ENCODE measurements at regions of chr11 and their contacts with region 1.

Region 1: DNA sequence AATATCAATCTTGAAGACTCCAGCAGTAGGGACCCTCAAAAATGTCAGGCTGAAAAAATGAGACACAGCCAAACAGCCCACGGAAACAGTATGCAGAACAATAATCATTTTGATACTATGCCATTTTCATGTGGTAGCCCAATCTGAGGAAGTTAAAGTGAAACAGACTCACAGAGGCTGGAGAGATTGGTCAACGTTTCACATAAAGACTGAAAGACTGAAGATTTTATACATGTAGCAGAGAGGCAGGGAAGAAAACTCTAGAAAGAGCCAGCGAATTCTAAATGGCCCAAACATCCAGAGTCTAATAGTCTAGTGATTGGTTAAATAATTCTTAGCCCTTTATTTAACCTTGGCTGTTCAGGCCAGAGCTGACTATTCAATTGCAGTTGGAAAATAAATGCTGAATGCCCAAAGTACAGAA is 49.4 kb downstream of the MAML2 start:
- DNase-seq: no peak
- H3K4me3 Mint-ChIP-seq: peak overlapping the region; percentile 1
- H3K27ac Mint-ChIP-seq: no peak overlapping the region
- H3K4me1 Mint-ChIP-seq: peaks cover 78% of the 10 kb centered on the region
- H3K27me3 Mint-ChIP-seq: no peaks in the 10 kb centered on the region

Region 2: GRCh38 chr11:96306933-96307775 is 13.5 kb after region 1 on chr11:
- CTCF ChIA-PET with region 1: interaction called, 6 read pairs
- intact Hi-C with region 1: loop called (anchors 1 kb)
- DNase-seq: peak; percentile 64
- H3K4me3 Mint-ChIP-seq: peak overlapping the region; percentile 47
- H3K27ac Mint-ChIP-seq: peak overlapping the region; percentile 25
- H3K4me1 Mint-ChIP-seq: peaks cover 77% of the 10 kb centered on the region
- H3K27me3 Mint-ChIP-seq: no peaks in the 10 kb centered on the region